SK-N-SH (cell line): ENCODE measurements at regions of chr11 and their contacts with region 1.

Region 1: GRCh38 chr11:61581030-61581928 is at the start of gene SYT7:
- DNase-seq: peak; percentile 97
- H3K4me3 ChIP-seq: peak within 1 kb of the TSS; percentile 53 to 57; a peak in 3 of 4 replicates
- H3K27ac ChIP-seq: peak within 1 kb of the TSS in 1 of 2 experiments; percentile 85; a peak in 2 of 4 replicates
- H3K4me1 ChIP-seq: peaks cover 0 to 45% of the 10 kb centered on the region in 2 experiments; a peak in 1 of 4 replicates
- H3K27me3 ChIP-seq: peaks cover 37% of the 10 kb centered on the region
- CTCF ChIP-seq: 0 out of 2 replicates have a peak, but pooled peaks have one; percentile 15
- EP300 ChIP-seq: no peak
- RAD21 ChIP-seq: peak; percentile 18; the same call in 1 of the 2 replicates
- polyA plus RNA-seq, gene SYT7: 1.1 and 1.4 TPM in 2 replicates

Region 2: GRCh38 chr11:61446211-61446651 is 135.0 kb before region 1 on chr11:
- CTCF ChIA-PET with region 1: interaction called, 32 read pairs
- POLR2A ChIA-PET with region 1: no interaction called
- DNase-seq: peak; percentile 78
- H3K4me3 ChIP-seq: no peak overlapping the region; a peak in 1 of 4 replicates
- H3K27ac ChIP-seq: peak overlapping the region; percentile 45 to 53; a peak in 3 of 4 replicates
- H3K4me1 ChIP-seq: peaks cover 5 to 13% of the 10 kb centered on the region in 2 experiments; a peak in 2 of 4 replicates
- H3K27me3 ChIP-seq: no peaks in the 10 kb centered on the region
- CTCF ChIP-seq: peak; percentile 94
- EP300 ChIP-seq: no peak
- RAD21 ChIP-seq: peak; percentile 88

Region 3: DNA sequence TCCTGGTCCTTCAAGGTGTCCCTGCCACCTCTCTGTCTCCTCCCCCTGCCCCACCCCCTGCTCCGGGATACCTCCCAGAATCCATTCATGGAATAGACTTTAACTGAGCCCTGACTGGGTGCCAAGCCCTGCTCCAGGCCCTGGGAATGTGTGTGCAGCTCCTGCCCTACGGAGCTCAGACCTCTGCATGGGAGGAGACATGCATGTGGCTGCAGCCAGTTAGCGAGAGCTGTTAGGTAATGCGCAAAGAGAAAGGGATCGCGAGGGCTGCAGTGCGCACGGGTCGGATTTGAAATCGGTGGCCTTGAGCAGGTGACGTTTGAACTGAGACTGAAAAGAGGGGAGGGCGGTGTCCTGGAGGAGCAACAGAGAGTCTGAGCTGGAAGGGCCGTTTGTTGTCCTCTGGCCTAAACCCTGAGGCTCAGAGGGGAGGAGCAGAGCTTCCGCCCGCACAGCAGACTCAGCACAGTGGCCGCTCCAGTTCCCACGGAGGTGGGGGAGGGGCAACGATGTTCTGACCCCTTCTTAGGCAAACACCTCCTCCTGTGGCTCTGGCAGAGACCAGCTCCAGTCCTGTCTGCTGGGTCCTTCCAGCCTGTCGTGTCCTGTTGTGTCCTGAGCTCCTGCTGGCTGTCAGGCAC is 92.5 kb before region 1 on chr11:
- CTCF ChIA-PET with region 1: interaction called, 156 read pairs
- POLR2A ChIA-PET with region 1: no interaction called
- DNase-seq: peak; percentile 51
- H3K4me3 ChIP-seq: no peak overlapping the region
- H3K27ac ChIP-seq: no peak overlapping the region
- H3K4me1 ChIP-seq: peaks cover 6 to 29% of the 10 kb centered on the region in 2 experiments; a peak in 1 of 4 replicates
- H3K27me3 ChIP-seq: no peaks in the 10 kb centered on the region
- CTCF ChIP-seq: no peak
- EP300 ChIP-seq: no peak
- RAD21 ChIP-seq: no peak

Region 4: DNA sequence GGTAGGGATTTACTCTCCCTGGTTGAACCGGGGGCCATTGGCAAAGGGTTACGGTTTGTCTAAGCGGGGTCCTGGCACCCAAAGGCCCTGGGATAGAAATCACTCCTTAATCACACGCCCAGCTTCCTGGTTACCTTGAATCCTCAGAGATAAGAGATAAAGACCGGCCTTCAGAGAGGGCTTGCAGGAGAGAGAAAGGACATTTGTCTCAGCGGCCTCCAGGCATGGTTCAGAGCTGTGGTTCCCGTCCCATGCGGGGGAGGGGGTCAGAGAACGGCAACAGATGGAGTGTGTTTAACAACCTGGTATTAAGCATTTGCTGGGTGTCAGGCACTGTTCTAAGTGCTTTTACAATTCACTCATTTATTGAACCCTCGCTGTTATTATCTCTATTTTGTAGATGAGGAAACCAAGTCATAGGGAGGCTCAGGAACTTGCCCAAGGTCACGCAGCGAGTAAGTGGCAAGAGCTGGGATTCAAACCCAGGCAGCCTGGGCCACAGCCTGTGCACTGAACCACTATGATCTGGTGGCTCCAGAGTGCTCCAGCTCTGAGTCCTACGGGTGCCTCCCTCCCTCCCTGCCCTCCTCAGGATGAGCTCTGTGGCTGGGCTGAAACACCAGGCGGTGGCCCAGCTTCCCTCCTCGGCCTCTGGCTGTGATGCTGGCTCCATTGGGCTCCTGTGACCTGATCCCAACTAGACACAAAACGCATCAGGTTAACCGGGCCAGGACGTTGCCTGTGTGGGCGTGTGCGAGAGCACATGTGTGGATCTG is 54.1 kb before region 1 on chr11:
- CTCF ChIA-PET with region 1: interaction called, 404 read pairs
- POLR2A ChIA-PET with region 1: interaction called, 5 read pairs
- DNase-seq: peak; percentile 61
- H3K4me3 ChIP-seq: no peak overlapping the region
- H3K27ac ChIP-seq: peak overlapping the region in 1 of 2 experiments; percentile 91; a peak in 2 of 4 replicates
- H3K4me1 ChIP-seq: peaks cover 0 to 60% of the 10 kb centered on the region in 2 experiments; a peak in 2 of 4 replicates
- H3K27me3 ChIP-seq: peaks cover 15% of the 10 kb centered on the region; the same call in 1 of the 2 replicates
- CTCF ChIP-seq: no peak
- EP300 ChIP-seq: no peak; a peak in 1 of 4 replicates
- RAD21 ChIP-seq: no peak

Region 5: DNA sequence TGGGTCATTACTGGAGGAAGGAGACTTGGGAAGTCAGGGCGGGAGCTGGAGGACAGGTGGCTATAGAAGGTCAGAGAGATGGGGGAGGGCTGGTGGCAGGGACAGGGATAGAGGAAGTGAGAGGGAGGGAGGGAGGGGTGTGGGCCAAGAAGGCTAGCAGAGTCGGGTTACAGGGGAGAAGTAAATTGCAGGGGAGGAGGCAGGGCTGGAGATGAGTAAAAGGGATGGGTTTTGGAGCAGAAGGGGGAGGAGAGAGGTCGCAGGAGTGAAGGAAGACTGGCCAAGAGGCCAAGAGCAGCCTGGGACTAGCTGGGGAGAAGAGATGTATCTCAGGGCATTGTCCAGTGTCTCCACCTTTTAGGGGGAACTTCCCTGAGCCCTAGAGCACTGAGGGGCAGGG is 39.7 kb before region 1 on chr11:
- CTCF ChIA-PET with region 1: interaction called, 23 read pairs
- POLR2A ChIA-PET with region 1: interaction called, 3 read pairs
- DNase-seq: peak; percentile 63
- H3K4me3 ChIP-seq: no peak overlapping the region
- H3K27ac ChIP-seq: peak overlapping the region in 1 of 2 experiments; percentile 88; a peak in 2 of 4 replicates
- H3K4me1 ChIP-seq: peaks cover 0 to 63% of the 10 kb centered on the region in 2 experiments; a peak in 2 of 4 replicates
- H3K27me3 ChIP-seq: no peaks in the 10 kb centered on the region
- CTCF ChIP-seq: no peak
- EP300 ChIP-seq: no peak
- RAD21 ChIP-seq: no peak

Region 6: DNA sequence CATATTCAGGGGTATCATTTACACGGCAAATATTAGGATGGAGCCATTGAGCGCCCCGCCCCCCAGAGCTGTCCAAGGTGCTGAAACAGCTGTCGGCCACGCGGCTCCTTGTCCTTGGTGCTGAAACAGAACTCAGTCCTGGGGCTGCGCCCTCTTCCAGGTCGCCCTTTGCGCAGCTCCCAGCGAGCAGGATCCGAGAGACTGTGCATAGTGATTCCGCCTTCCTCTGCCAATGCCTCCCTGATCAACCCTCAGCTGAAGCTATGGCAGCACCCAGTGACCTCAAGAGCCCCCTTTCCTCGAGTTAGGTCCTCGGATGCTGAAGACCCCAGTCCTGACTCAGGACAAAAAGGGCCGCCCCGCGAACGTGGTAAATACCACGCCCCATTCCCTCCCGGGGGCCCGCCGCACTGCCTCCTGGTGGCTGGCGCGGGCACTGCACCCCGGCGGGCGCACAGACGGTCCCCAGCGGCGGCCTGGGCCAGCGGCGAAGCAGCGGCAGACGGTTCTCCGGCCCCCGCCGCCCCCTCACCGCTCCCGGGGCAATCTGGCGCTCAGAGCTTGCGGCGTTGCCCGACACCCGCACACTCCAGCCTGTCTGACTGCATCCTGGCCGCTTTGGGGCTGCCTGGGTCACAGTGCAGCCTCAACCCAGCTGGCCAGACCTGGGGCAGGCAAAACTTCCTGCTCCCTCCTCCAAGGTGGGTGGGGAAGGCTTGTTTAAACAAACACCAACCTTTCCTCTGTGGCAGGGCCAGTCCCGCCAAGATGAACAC is 13.8 kb before region 1 on chr11:
- CTCF ChIA-PET with region 1: interaction called, 43 read pairs
- POLR2A ChIA-PET with region 1: no interaction called
- DNase-seq: peak; percentile 63
- H3K4me3 ChIP-seq: no peak overlapping the region; a peak in 1 of 4 replicates
- H3K27ac ChIP-seq: no peak overlapping the region; a peak in 1 of 4 replicates
- H3K4me1 ChIP-seq: peaks cover 0 to 79% of the 10 kb centered on the region in 2 experiments; a peak in 1 of 4 replicates
- H3K27me3 ChIP-seq: no peaks in the 10 kb centered on the region; the same call in 1 of the 2 replicates
- CTCF ChIP-seq: no peak; the same call in none of the 2 replicates
- EP300 ChIP-seq: no peak
- RAD21 ChIP-seq: no peak

Region 7: DNA sequence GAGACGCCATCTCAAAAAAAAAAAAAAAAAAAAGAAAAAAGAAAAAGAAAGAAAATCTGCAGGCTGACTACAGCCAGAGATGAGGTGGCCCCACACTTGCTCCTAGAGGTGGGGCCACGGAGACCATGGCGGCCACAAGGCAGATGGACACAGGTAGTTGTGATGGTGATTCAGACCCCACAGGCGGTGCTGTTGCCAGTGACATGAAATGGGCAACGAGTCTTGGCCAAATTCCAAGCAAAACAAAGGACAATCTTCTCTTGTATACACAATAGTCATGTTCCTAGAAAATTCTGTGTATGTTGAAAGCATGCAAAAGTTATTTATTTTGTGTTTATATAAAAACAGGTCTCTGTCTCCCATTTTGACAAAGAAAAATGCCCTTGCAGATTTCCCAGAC is 76.3 kb after region 1 on chr11:
- CTCF ChIA-PET with region 1: no interaction called
- POLR2A ChIA-PET with region 1: no interaction called
- DNase-seq: no peak
- H3K4me3 ChIP-seq: no peak overlapping the region
- H3K27ac ChIP-seq: no peak overlapping the region
- H3K4me1 ChIP-seq: no peaks in the 10 kb centered on the region
- H3K27me3 ChIP-seq: no peaks in the 10 kb centered on the region; the same call in 1 of the 2 replicates
- CTCF ChIP-seq: no peak
- EP300 ChIP-seq: no peak
- RAD21 ChIP-seq: no peak

Region 8: DNA sequence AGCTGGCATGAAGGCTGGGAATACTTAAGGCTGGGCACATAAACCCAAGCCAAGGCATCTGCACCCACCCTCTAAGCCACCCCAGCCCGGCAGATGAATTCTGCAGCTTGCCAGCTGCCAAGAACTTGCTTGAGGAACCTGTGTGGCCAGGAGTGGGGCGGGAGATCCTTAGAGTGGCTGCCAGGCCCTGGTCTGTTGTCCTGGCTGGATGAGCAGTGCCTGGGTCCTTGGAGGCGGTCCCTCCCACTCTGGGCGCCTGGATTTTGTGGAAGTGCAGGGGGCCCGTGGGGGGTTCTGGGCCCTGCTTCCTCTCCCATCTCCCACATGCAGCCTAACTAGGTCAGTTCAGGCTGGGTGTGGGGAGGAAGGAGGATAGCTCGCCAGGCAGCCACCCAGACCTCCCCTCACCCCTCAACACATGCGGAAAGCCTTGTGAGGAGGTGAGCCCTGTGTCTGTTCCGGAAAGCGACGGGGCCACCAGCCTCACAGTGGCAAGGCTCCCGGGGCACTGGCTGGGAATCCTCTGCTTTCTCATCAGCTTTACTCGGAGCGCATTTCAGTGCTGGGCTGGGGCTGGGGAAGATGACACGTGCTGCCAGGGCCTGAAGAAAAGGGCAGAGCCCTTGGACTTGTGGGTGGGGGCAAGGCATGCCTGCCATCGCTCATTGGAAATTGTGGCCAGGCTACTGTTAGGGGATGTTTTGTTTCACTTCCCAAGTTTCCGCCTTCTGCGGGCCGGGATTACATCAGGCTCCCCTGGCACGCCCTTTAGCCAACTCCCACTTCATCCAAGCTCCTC is 107.3 kb after region 1 on chr11:
- CTCF ChIA-PET with region 1: no interaction called
- POLR2A ChIA-PET with region 1: no interaction called
- DNase-seq: no peak
- H3K4me3 ChIP-seq: no peak overlapping the region
- H3K27ac ChIP-seq: no peak overlapping the region
- H3K4me1 ChIP-seq: peaks cover 0 to 16% of the 10 kb centered on the region in 2 experiments; a peak in 1 of 4 replicates
- H3K27me3 ChIP-seq: no peaks in the 10 kb centered on the region
- CTCF ChIP-seq: no peak
- EP300 ChIP-seq: no peak
- RAD21 ChIP-seq: no peak